ENCODE measurements at regions of chr1 and their contacts with region 1.

Region 1: GRCh38 chr1:225809842-225810578 is at the start of gene EPHX1:
- DNase-seq: peak; percentile 85
- H3K4me3 ChIP-seq: peak within 1 kb of the TSS in 2 of 3 experiments; percentile 43 to 70
- H3K27ac ChIP-seq: no peak within 1 kb of the TSS
- H3K4me1 ChIP-seq: peaks cover 8% of the 10 kb centered on the region
- H3K27me3 ChIP-seq: no peaks in the 10 kb centered on the region
- CTCF ChIP-seq: peak in 1 of 2 donors; percentile 40
- POLR2A ChIP-seq: peak; percentile 96
- total RNA-seq, gene EPHX1: 19.1 and 23.7 TPM in 2 replicates

Region 2: GRCh38 chr1:225845571-225846259 is 35.7 kb after region 1 on chr1:
- CTCF ChIA-PET with region 1: interaction called, 3 read pairs
- POLR2A ChIA-PET with region 1: no interaction called
- dilution Hi-C with region 1: no loop called
- intact Hi-C with region 1: loop called (anchors 1 kb)
- DNase-seq: peak; percentile 70
- H3K4me3 ChIP-seq: no peak overlapping the region
- H3K27ac ChIP-seq: no peak overlapping the region
- H3K4me1 ChIP-seq: no peaks in the 10 kb centered on the region
- H3K27me3 ChIP-seq: no peaks in the 10 kb centered on the region
- CTCF ChIP-seq: peak; percentile 72 to 91
- POLR2A ChIP-seq: no peak

Region 3: DNA sequence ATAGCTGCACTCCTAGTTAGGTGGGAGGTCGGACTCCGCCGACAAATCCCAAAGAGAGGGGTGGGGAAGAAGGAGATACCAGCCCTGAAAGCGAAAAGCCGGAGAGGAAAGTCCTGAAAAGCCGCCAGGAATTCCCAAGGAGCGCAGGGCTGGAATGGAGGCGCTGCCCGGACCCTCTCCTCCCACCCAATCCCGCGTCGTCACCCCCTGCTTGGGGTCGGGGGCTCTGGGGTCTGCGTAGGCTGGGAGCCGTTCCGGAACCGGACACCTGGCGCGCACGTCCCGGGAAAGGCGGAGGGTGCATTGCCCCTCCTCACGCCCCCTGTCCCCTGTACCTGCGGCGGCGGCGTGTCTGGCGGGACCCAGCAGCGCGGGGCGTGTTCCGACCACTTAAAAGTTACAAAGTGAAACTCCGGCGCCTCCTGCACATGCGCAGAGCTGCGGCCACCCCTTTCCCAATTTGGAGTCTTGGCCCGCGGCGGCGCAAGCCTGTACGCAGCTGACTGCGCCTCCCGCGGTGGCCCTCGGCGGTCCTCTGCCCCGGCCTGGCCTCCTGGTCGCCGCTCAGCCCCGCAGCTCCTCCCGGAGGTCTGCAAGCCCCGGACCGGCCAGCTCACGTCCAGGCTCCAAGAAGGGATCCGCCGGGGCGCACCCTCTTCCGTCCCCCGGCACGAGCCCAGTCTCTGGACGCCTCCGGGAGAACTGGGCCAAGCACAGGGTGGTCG is 72.1 kb after region 1 on chr1 and contains the start of gene TMEM63A:
- CTCF ChIA-PET with region 1: interaction called, 6 read pairs
- POLR2A ChIA-PET with region 1: no interaction called
- dilution Hi-C with region 1: no loop called
- intact Hi-C with region 1: loop called (anchors 2 kb)
- DNase-seq: peak; percentile 86
- H3K4me3 ChIP-seq: peak within 1 kb of the TSS; percentile 70 to 91 (median 81)
- H3K27ac ChIP-seq: peak within 1 kb of the TSS; percentile 38
- H3K4me1 ChIP-seq: peaks cover 14% of the 10 kb centered on the region
- H3K27me3 ChIP-seq: no peaks in the 10 kb centered on the region
- CTCF ChIP-seq: peak; percentile 16 to 37
- POLR2A ChIP-seq: no peak
- total RNA-seq, gene TMEM63A: 40.8 and 41.4 TPM in 2 replicates